Endothelial cell of umbilical vein (primary cell): ENCODE measurements at regions of chr1 and their contacts with region 1.

Region 1: GRCh38 chr1:186943891-186944686 is 115.3 kb downstream of the PLA2G4A start:
- DNase-seq: peak; percentile 94
- H3K4me3 ChIP-seq: no peak overlapping the region
- H3K27ac ChIP-seq: peak overlapping the region; percentile 99
- H3K4me1 ChIP-seq: peaks cover 59% of the 10 kb centered on the region
- H3K27me3 ChIP-seq: no peaks in the 10 kb centered on the region
- CTCF ChIP-seq: no peak
- POLR2A ChIP-seq: peak; percentile 67

Region 2: DNA sequence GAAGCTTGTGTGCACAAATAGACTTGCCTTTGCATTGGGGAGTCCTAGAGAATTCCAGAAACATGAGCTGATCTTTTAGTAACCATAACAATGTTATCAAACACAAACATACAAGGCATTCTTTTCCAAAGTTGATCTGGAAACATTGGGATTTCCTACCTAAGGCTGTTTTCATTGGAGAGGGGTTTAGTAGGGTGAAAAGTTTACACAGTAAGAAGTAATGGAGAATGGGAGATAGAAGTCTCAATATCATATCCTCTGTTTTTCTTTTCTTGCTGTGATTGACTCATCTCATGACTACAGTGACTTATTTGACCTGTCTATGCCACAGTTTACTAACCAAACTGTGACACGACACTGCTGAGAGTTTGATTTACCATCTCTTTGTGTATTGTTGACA is 181.0 kb before region 1 on chr1:
- CTCF ChIA-PET with region 1: no interaction called
- POLR2A ChIA-PET with region 1: no interaction called
- dilution Hi-C with region 1: no loop called
- intact Hi-C with region 1: loop called (anchors 1 kb)
- DNase-seq: peak; percentile 96
- H3K4me3 ChIP-seq: no peak overlapping the region
- H3K27ac ChIP-seq: peak overlapping the region; percentile 92
- H3K4me1 ChIP-seq: peaks cover 20% of the 10 kb centered on the region
- H3K27me3 ChIP-seq: no peaks in the 10 kb centered on the region
- CTCF ChIP-seq: no peak
- POLR2A ChIP-seq: no peak

Region 3: DNA sequence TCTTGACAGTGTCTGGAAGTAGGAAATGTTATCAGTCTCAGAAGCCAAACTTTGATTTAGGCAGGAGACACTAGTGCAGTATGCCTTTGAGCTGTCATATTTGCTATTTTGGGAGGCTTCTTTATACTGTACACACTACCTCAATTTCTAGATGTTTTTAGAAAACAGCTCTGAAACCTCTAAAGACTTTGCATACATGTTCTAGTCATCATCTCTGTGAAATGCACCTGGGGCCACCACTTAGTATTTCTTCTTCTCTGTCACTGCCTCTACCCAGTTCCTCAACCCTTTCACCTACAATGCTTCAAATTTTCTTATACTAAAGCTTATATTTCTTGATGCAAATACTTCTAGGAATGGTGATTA is 144.4 kb before region 1 on chr1:
- CTCF ChIA-PET with region 1: no interaction called
- POLR2A ChIA-PET with region 1: no interaction called
- dilution Hi-C with region 1: no loop called
- intact Hi-C with region 1: no loop called
- DNase-seq: no peak
- H3K4me3 ChIP-seq: no peak overlapping the region
- H3K27ac ChIP-seq: no peak overlapping the region
- H3K4me1 ChIP-seq: no peaks in the 10 kb centered on the region
- H3K27me3 ChIP-seq: no peaks in the 10 kb centered on the region
- CTCF ChIP-seq: no peak
- POLR2A ChIP-seq: no peak

Region 4: DNA sequence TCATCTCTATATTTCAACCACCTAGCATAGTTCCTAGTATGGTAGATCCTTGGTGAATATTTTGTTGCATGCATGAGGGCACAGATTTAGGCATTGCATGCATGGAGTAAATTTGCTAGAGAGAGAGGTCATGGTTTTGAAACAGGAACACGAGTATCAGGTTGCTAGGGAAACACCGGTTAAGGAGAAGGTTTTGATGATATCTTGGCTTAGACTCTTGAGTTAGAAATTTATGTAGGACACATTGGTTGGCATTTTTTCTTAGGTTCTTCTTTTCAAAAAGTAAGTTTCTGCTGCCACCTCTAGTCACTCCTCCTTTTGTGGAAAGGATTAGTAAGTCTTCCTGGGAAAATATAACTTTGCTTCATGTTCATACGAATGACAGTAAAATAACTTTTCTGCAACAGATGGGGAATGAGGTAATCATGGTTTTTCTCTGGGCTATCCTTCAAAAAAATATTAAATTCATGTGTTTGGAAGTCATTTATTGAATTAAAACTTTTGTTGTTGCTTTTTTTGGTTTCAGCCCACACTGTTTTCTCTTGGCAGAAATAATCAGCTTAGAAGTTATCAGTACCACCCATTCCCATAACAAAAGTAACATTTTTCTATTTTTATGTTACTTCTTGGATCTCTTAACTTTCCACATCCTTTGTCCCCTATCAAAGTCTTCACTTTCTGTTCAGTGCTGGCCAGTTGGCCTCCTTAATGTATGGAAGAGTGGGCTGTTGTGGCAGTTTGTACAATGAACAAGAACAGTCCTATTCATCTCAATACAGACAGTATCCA is 18.0 kb before region 1 on chr1:
- CTCF ChIA-PET with region 1: interaction called, 3 read pairs
- POLR2A ChIA-PET with region 1: no interaction called
- dilution Hi-C with region 1: no loop called
- intact Hi-C with region 1: loop called (anchors 2 kb)
- DNase-seq: peak; percentile 55
- H3K4me3 ChIP-seq: no peak overlapping the region
- H3K27ac ChIP-seq: no peak overlapping the region
- H3K4me1 ChIP-seq: peaks cover 5% of the 10 kb centered on the region
- H3K27me3 ChIP-seq: no peaks in the 10 kb centered on the region
- CTCF ChIP-seq: no peak
- POLR2A ChIP-seq: no peak